Ascending aorta (tissue), 2 donors: ENCODE measurements at regions of chr4 and their contacts with region 1.

Region 1: DNA sequence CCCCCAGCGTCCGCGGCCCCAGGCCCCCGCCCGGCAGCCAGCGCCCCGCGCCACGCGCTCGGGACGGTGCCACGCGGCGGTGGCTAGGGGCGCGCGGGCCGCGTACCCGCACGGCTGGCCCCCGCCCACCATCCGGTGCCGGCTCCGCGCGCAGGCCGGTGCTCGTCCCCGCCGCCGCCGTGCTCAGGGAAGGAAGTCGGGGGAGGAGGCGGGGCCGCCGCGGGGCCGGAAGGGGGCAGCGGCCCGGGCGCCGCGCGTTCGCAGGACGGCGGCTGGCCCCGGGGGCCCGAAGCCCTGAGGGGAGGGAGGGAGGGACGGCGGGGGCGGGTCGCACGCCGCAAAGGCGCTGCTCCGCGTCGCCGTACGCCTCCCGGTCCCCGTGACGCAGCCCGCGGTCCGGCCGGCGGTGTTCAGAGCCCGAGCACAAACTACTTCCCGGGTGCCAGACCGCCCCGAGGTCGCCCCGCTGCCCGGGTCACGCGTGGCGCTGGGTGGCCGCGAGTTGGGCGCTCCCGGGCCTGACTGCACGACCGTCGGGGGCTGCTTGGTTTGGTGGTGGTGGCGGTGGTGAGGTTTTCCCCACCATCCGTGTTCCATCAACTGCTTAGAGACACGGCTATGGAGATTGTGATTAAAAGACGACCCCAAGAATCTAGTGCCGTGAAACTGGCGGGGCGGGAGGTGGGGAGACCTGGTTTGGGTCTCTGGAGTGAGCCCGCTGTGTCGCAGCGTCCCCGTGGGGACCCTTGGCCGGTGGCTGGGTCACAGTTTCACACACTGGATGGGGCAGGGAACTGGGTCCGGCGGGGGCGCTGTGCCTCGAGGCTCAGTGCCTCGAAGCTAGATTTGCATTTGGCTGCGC is at the start of gene DCTD:
- DNase-seq: peak; percentile 23 to 88
- H3K4me3 ChIP-seq: peak within 1 kb of the TSS; percentile 76 to 87
- H3K27ac ChIP-seq: peak within 1 kb of the TSS; percentile 86 to 99
- H3K4me1 ChIP-seq: peaks cover 0 to 8% of the 10 kb centered on the region in 2 donors
- H3K27me3 ChIP-seq: no peaks in the 10 kb centered on the region
- CTCF ChIP-seq: peak in 2 of 3 experiments; percentile 38 to 44
- total RNA-seq, gene DCTD: 17.2 TPM

Region 2: DNA sequence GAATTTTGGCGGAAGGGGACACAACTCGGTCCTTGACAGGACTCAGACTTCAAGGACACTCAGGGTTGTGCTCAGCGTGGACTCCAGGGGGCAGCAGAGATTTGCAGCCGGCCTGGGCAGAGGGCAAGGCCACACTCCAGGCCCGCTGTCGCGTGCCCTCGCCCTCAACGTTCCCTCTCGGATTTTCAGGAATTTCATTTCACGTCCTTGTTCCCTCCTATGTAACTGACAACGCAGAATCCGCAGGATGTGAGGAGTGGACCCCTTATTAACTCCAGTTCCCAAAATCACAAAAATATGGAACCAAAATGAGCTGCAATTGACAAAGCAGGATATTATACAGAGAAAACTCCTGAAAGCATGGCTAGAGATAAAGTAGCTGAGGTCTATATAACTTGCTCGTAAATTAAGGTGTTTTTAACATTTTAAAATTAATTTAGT is 20.8 kb after region 1 on chr4:
- intact Hi-C with region 1: no loop called
- DNase-seq: peak in 1 of 2 donors; percentile 77
- H3K4me3 ChIP-seq: no peak overlapping the region
- H3K27ac ChIP-seq: no peak overlapping the region
- H3K4me1 ChIP-seq: no peaks in the 10 kb centered on the region
- H3K27me3 ChIP-seq: no peaks in the 10 kb centered on the region
- CTCF ChIP-seq: peak; percentile 59 to 92 (median 89)

Region 3: DNA sequence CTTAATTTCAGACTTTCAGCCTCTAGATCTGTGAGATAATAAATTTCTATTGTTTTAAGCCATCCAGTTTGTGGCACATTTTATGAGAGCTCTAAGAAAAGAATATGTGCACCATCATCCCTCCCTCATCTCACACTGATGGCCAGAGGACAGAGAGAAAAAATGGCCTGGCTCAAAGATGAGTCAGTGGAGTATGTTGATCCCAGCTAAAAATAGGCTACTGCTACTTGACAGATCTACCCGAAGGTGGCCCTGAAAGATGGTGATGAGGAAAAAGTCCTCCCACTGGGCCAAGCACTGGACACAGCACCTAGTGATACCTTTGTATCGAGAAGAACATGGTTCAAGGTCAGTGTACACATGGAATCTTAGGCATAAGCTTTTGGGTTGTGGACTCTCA is 38.0 kb after region 1 on chr4:
- intact Hi-C with region 1: no loop called
- DNase-seq: no peak
- H3K4me3 ChIP-seq: no peak overlapping the region
- H3K27ac ChIP-seq: no peak overlapping the region
- H3K4me1 ChIP-seq: no peaks in the 10 kb centered on the region
- H3K27me3 ChIP-seq: no peaks in the 10 kb centered on the region
- CTCF ChIP-seq: no peak

Region 4: DNA sequence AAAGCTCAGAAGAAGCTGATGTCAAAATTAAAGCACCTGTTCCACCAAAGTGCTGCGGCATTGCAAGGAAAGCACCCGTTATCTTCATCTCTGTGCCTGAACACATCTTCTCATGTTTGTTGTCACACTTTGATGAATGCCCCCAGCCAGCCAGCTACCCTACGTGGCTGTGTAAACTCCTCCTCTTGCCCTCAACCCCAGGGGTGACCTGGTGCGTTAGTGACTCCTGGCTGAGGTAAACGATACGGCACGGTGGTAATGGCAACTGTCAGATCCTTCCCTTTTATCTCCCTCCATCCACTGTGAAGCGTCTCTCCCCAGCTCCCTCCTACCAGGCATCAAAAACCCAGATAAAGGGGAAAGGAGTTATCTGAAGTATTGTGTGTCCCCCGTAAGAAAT is 91.1 kb after region 1 on chr4:
- intact Hi-C with region 1: no loop called
- DNase-seq: no peak
- H3K4me3 ChIP-seq: no peak overlapping the region
- H3K27ac ChIP-seq: no peak overlapping the region
- H3K4me1 ChIP-seq: no peaks in the 10 kb centered on the region
- H3K27me3 ChIP-seq: no peaks in the 10 kb centered on the region
- CTCF ChIP-seq: no peak

Region 5: GRCh38 chr4:183444214-183445066 is 527.0 kb after region 1 on chr4 and contains the start of gene CDKN2AIP:
- intact Hi-C with region 1: loop called (anchors 1 kb)
- DNase-seq: peak; percentile 64 to 96
- H3K4me3 ChIP-seq: peak within 1 kb of the TSS; percentile 89 to 96
- H3K27ac ChIP-seq: peak within 1 kb of the TSS; percentile 95 to 99
- H3K4me1 ChIP-seq: peaks cover 12 to 30% of the 10 kb centered on the region in 2 donors
- H3K27me3 ChIP-seq: no peaks in the 10 kb centered on the region
- CTCF ChIP-seq: peak in 1 of 3 experiments; percentile 17
- total RNA-seq, gene CDKN2AIP: 34.5 TPM